ENCODE measurements at regions of chr6 and their contacts with region 1.

Region 1: GRCh38 chr6:71420693-71421328 is 132.2 kb downstream of the OGFRL1 start:
- DNase-seq: peak; percentile 95 to 98 (median 98)
- ATAC-seq: peak; percentile 98 to 99 (median 99)
- H3K4me3 ChIP-seq: peak overlapping the region; percentile 74 to 94 (median 88)
- H3K27ac ChIP-seq: peak overlapping the region; percentile 89 to 99 (median 97)
- H3K4me1 ChIP-seq: peaks cover 4 to 28% (median 19%) of the 10 kb centered on the region in 12 donors
- H3K27me3 ChIP-seq: peaks cover 0 to 20% (median 0%) of the 10 kb centered on the region in 9 donors
- CTCF ChIP-seq: peak in 1 of 12 donors; percentile 11
- POLR2A ChIP-seq: peak; percentile 87 to 99

Region 2: DNA sequence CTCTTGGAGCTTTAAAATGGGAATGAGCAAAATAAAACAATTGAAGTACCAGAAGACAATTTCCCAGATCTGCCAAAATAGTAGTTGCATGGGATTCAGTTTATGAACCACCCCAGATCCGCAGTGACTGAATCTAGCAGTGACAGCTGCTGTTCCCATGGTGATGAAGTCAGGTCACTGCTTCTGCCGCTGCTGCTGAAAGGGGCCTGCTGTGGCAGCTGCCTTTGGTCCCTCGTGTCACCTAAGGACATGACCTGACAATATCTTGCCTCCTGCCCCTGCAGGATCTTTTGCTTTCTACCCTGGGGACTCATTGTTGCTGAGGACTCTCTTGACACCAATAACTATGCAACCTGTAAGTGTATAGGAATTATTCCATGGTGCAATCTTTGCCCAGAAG is 166.5 kb before region 1 on chr6:
- intact Hi-C with region 1: no loop called
- DNase-seq: peak in 2 of 5 donors; percentile 38 to 39
- ATAC-seq: peak in 3 of 4 donors; percentile 40 to 53 (median 52)
- H3K4me3 ChIP-seq: no peak overlapping the region
- H3K27ac ChIP-seq: peak overlapping the region in 4 of 12 donors; percentile 8 to 39 (median 28)
- H3K4me1 ChIP-seq: peaks cover 0 to 65% (median 20%) of the 10 kb centered on the region in 12 donors
- H3K27me3 ChIP-seq: no peaks in the 10 kb centered on the region
- CTCF ChIP-seq: no peak
- POLR2A ChIP-seq: no peak

Region 3: DNA sequence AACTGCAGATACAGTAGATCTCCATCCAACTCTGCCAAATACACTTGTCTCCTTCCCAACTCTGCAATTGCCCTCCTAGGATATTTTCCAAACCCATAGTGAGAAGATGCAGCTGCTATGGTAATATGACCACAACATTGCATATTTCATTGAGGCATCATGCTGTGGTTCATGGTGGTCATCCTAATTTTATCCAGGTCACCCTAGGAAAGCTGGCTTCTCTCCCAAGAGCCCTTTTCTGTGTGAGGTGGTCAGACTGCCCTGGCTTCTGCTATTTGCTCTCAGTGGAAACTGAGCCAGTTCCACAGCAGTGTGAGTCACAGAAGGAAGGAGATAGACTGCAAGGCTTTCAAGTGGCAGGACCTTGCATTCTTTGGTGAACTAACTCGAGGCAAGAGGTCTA is 126.7 kb before region 1 on chr6:
- intact Hi-C with region 1: loop called in 2 of 10 experiments (anchors 5 to 10 kb)
- DNase-seq: no peak
- ATAC-seq: peak; percentile 33 to 83 (median 60)
- H3K4me3 ChIP-seq: no peak overlapping the region
- H3K27ac ChIP-seq: no peak overlapping the region
- H3K4me1 ChIP-seq: peaks cover 0 to 52% (median 19%) of the 10 kb centered on the region in 12 donors
- H3K27me3 ChIP-seq: no peaks in the 10 kb centered on the region
- CTCF ChIP-seq: no peak
- POLR2A ChIP-seq: no peak